A673 (cell line): ENCODE measurements at regions of chr4 and their contacts with region 1.

Region 1: GRCh38 chr4:37603070-37603468 is 83.1 kb downstream of the RELL1 start:
- DNase-seq: peak; percentile 67
- H3K4me3 ChIP-seq: no peak overlapping the region
- H3K27ac ChIP-seq: no peak overlapping the region
- H3K4me1 ChIP-seq: peaks cover 8% of the 10 kb centered on the region
- H3K27me3 ChIP-seq: no peaks in the 10 kb centered on the region
- CTCF ChIP-seq: peak; percentile 98

Region 2: DNA sequence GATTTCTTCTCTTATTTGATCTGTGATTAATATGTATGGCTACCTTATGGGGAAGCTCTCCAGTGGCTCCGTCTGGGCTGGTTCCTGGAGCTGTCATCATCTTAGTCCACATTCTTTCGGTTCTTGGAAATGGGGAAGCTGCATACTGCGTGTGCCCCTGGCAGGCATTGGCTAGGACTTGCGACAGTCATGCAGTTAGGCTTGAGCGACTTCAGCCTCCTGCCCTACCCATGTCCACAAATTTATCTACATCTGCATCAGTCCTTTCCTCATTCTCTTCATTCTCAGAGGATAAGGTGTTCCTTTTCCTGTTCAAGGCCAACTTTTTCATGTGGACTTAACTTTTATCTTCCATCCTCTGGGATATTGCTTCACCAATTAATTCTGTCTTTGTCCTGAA is 131.1 kb before region 1 on chr4:
- CTCF ChIA-PET with region 1: no interaction called
- POLR2A ChIA-PET with region 1: no interaction called
- intact Hi-C with region 1: no loop called
- DNase-seq: no peak
- H3K4me3 ChIP-seq: no peak overlapping the region
- H3K27ac ChIP-seq: no peak overlapping the region
- H3K4me1 ChIP-seq: no peaks in the 10 kb centered on the region
- H3K27me3 ChIP-seq: peaks cover 33% of the 10 kb centered on the region
- CTCF ChIP-seq: no peak

Region 3: DNA sequence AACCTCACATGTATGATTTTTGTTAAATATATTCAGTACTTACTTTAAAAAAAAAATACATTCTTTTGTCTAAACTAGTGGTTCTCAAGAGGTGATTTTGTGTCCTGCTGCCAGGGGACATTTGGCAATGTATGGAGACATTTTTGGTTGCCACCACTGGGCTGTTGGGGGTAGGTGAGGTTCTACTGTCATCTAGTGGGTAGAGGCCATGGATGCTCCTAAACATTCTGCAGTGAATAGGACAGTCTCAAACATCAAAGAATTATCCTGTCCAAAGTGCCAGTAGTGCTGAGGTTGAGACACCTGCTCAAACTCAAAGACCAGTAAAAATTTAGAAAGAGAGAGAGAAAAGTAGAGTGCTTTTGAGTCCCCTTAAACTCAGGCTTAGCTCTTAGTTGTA is 190.5 kb after region 1 on chr4:
- CTCF ChIA-PET with region 1: no interaction called
- POLR2A ChIA-PET with region 1: no interaction called
- intact Hi-C with region 1: loop called (anchors 2 kb)
- DNase-seq: peak; percentile 19
- H3K4me3 ChIP-seq: no peak overlapping the region
- H3K27ac ChIP-seq: no peak overlapping the region
- H3K4me1 ChIP-seq: no peaks in the 10 kb centered on the region
- H3K27me3 ChIP-seq: peaks cover 6% of the 10 kb centered on the region
- CTCF ChIP-seq: peak; percentile 47

Region 4: DNA sequence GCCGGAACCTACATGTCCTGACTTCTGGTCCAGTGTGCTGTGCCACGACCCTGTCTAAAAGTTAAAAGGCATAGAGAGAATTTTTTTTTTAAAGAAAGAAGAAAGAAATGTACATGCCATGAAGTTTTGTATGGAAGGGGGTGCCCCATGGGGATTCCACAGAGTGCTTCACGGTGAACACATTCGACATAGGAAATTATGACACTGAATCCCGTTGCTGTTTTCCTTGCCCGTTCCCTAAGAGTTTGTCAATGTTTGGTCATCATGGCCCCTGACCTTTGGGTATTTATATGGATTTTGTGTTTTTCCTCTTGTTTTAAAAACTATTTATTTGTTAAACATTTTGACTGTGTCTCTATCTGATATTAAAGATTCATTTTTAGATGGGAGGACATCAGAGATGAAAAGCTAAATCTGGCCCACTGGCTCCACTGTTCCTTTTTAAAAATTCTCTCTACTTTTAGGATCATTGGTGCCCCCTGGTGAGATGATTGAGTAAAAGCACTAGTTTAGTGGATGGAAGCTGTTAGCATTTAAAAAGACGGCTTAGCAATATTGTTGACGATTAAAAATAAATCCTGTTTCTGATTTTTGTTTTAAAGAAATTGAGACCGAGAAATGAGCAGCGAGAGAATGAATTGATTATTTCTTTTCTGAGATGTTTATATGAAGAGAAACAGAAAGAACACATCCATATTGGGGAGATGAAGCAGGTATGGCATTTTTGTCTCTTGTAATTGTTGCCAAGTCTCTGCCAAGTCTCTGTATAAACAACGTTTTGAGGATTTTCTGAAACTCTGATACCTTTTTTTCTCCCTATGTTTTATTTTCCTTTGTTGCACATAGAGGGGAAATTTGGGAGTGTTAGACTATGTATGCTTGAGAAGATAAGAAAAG is 432.2 kb after region 1 on chr4:
- CTCF ChIA-PET with region 1: no interaction called
- POLR2A ChIA-PET with region 1: no interaction called
- intact Hi-C with region 1: loop called (anchors 2 kb)
- DNase-seq: peak; percentile 79
- H3K4me3 ChIP-seq: no peak overlapping the region
- H3K27ac ChIP-seq: no peak overlapping the region
- H3K4me1 ChIP-seq: no peaks in the 10 kb centered on the region
- H3K27me3 ChIP-seq: no peaks in the 10 kb centered on the region
- CTCF ChIP-seq: peak; percentile 74

Region 5: GRCh38 chr4:38119668-38120385 is 516.8 kb after region 1 on chr4:
- CTCF ChIA-PET with region 1: no interaction called
- POLR2A ChIA-PET with region 1: no interaction called
- intact Hi-C with region 1: no loop called
- DNase-seq: no peak
- H3K4me3 ChIP-seq: no peak overlapping the region
- H3K27ac ChIP-seq: no peak overlapping the region
- H3K4me1 ChIP-seq: peaks cover 5% of the 10 kb centered on the region
- H3K27me3 ChIP-seq: no peaks in the 10 kb centered on the region
- CTCF ChIP-seq: no peak